ENCODE measurements at regions of chr17 and their contacts with region 1.

Region 1: GRCh38 chr17:78925234-78925633 is at the start of gene TIMP2:
- DNase-seq: peak; percentile 70
- ATAC-seq: peak; percentile 79
- H3K4me3 ChIP-seq: peak within 1 kb of the TSS; percentile 78 to 82 (median 78)
- H3K27ac ChIP-seq: peak within 1 kb of the TSS; percentile 59
- H3K4me1 ChIP-seq: peaks cover 51% of the 10 kb centered on the region
- H3K27me3 ChIP-seq: peaks cover 6 to 32% of the 10 kb centered on the region in 2 experiments; a peak in 3 of 5 replicates
- CTCF ChIP-seq: 0 out of 2 replicates have a peak, but pooled peaks have one; percentile 23
- EP300 ChIP-seq: no peak
- POLR2A ChIP-seq: peak; percentile 65 to 84
- RAD21 ChIP-seq: no peak
- total RNA-seq, gene TIMP2: 2.2 and 3.8 TPM in 2 replicates

Region 2: DNA sequence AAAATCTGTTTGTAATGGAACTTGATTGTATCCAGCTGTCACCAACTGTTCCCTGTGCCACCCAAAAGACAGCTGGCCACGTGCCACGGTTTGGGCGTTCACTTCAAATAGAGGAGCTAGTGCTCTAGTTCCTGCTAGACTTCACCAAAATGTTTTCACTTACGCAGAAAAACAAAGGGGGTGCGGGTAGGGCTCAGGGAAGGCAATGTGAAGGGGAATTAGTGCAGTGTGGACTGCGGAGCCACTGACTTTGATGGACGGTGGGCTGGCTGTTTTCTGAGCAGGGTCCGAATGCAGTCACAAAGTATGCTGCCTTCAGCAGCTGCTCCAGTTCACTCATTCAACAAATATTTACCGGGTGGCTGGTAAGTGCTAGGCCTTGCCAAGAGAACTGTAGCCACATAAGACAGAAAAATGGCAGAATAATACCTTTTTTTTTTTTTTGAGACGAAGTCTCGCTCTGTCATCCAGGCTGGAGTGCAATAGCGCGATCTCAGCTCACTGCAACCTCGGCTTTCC is 135.5 kb before region 1 on chr17:
- CTCF ChIA-PET with region 1: no interaction called
- POLR2A ChIA-PET with region 1: no interaction called
- in situ Hi-C with region 1: no loop called
- intact Hi-C with region 1: no loop called
- DNase-seq: no peak
- ATAC-seq: no peak
- H3K4me3 ChIP-seq: no peak overlapping the region
- H3K27ac ChIP-seq: no peak overlapping the region
- H3K4me1 ChIP-seq: peaks cover 37% of the 10 kb centered on the region
- H3K27me3 ChIP-seq: no peaks in the 10 kb centered on the region
- CTCF ChIP-seq: no peak
- EP300 ChIP-seq: no peak
- POLR2A ChIP-seq: no peak
- RAD21 ChIP-seq: no peak

Region 3: DNA sequence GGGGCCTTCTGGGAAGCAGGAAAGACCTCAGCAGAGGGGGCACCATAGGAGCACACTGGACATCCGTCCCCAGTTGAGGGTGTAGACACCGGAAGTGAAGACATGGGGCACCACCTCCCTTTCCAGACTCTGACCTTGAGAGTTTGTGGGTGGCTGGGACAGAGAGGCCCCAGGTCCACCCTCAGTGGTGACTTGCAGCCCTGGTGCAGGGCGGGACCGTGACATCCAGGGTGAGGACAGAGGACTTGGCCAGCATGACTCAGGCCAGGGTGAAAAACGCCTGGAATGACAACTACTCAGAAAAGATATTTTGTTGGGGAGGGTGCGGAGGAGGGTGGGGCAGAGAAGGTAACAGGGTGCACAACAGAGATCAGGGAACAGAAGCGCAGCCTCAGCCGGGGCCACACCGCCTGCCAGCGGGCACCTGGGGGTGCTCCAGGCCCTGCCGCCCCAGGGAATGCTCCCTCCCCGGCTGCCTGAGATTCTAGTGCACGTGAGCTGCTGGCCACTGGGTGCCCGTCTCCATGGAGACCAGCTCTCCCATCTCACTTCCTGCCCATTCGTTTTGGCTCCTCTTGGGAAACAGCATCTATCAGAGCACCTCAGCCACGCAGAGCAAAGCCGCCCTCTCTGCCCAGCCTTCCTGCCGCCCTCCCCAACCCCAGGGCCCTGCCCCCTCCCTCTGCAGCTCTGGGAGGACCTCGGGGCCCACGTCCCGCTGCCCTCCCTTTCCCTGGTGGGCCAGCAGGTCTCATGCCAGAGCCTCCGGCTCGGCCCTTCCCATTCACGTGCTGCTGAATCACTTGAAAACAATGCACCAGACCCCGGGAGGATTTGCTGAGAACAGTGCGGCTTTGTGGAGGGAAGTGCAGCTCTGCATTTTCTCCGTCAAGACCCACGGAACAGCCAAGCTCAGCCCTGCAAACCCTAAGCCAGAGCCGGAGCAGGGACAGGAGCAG is 41.8 kb before region 1 on chr17:
- CTCF ChIA-PET with region 1: no interaction called
- POLR2A ChIA-PET with region 1: interaction called, 4 read pairs
- in situ Hi-C with region 1: no loop called
- intact Hi-C with region 1: loop called (anchors 1 kb)
- DNase-seq: peak; percentile 92
- ATAC-seq: peak; percentile 83
- H3K4me3 ChIP-seq: peak overlapping the region; percentile 17 to 60 (median 38); a peak in 5 of 6 replicates
- H3K27ac ChIP-seq: peak overlapping the region; percentile 66
- H3K4me1 ChIP-seq: peaks cover 29% of the 10 kb centered on the region
- H3K27me3 ChIP-seq: no peaks in the 10 kb centered on the region
- CTCF ChIP-seq: peak; percentile 12; the same call in 1 of the 2 replicates
- EP300 ChIP-seq: peak; percentile 15 to 44; a peak in 2 of 4 replicates
- POLR2A ChIP-seq: peak; percentile 44 to 47; a peak in 2 of 4 replicates
- RAD21 ChIP-seq: peak; percentile 12; the same call in 1 of the 2 replicates

Region 4: DNA sequence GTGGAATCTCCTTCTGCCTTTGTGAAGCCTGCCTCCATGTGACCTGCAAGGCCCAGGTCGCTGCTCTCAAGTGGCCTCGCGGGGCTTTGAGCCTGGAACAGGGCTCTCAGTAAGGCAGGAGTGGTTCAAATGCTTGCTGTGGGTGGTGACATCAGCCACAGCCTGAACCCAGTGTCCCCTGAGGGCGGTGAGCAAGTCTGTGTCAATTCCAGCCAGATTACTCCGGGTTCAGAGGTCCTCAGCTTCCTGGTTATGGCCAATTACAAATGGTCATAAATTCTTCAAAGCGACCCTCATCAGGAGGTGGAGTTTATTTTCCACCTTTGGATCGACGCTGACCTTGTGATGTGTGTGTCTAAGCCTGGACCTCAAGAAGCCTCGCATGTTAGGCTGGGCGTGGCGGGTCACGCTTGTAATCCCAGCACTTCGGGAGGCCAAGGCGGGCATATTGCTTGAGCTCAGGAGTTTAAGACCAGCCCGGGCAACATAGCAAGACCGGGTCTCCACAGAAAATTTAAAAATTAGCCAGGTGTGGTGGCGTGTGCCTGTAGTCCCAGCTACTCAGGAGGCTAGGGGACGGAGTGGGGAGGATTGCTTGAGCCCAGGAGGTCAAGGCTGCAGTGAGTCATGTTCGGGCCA is 37.2 kb after region 1 on chr17:
- CTCF ChIA-PET with region 1: no interaction called
- POLR2A ChIA-PET with region 1: interaction called, 5 read pairs
- in situ Hi-C with region 1: no loop called
- intact Hi-C with region 1: loop called (anchors 5 kb)
- DNase-seq: peak; percentile 96
- ATAC-seq: peak; percentile 91
- H3K4me3 ChIP-seq: no peak overlapping the region
- H3K27ac ChIP-seq: peak overlapping the region; percentile 70
- H3K4me1 ChIP-seq: peaks cover 61% of the 10 kb centered on the region
- H3K27me3 ChIP-seq: peaks cover 0 to 1% of the 10 kb centered on the region in 2 experiments; a peak in 3 of 5 replicates
- CTCF ChIP-seq: peak; percentile 24
- EP300 ChIP-seq: peak; percentile 79 to 85
- POLR2A ChIP-seq: peak; percentile 46 to 60; a peak in 3 of 4 replicates
- RAD21 ChIP-seq: peak; percentile 10; the same call in 1 of the 2 replicates

Region 5: DNA sequence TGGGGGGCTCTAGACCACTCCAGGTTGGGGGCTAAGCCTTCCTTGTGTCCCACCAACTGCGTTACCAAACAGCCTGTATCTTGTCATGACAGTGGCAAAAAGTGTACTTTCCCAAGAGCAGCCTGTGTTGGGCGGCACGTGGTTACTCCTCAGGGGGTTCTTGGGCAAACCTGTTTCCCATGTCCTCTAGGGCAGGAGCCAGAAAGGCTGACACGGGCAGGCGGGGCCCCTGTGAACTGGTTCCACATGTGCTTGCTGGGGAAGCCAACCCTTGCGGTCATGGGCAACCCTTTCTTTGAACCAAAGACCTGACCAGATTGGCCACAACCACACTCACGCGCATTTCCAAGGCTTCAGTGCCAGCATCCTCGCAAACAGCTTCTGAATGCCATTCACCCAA is 457.1 kb after region 1 on chr17:
- CTCF ChIA-PET with region 1: no interaction called
- POLR2A ChIA-PET with region 1: no interaction called
- in situ Hi-C with region 1: no loop called
- intact Hi-C with region 1: no loop called
- DNase-seq: no peak
- ATAC-seq: no peak
- H3K4me3 ChIP-seq: no peak overlapping the region
- H3K27ac ChIP-seq: no peak overlapping the region
- H3K4me1 ChIP-seq: no peaks in the 10 kb centered on the region
- H3K27me3 ChIP-seq: peaks cover 28 to 80% of the 10 kb centered on the region in 2 experiments
- CTCF ChIP-seq: no peak
- EP300 ChIP-seq: no peak
- POLR2A ChIP-seq: no peak
- RAD21 ChIP-seq: no peak